PC-9 (cell line): ENCODE measurements at regions of chr16 and their contacts with region 1.

Region 1: GRCh38 chr16:55701442-55702319 is 45.9 kb downstream of the SLC6A2 start:
- DNase-seq: peak; percentile 50 to 53
- H3K4me3 ChIP-seq: no peak overlapping the region
- H3K27ac ChIP-seq: no peak overlapping the region
- H3K4me1 ChIP-seq: peaks cover 10% of the 10 kb centered on the region
- H3K27me3 ChIP-seq: no peaks in the 10 kb centered on the region
- CTCF ChIP-seq: peak; percentile 86

Region 2: GRCh38 chr16:55465077-55465896 is 236.4 kb before region 1 on chr16:
- CTCF ChIA-PET with region 1: interaction called, 6 read pairs
- POLR2A ChIA-PET with region 1: no interaction called
- intact Hi-C with region 1: loop called (anchors 1 kb)
- DNase-seq: peak; percentile 72 to 82
- H3K4me3 ChIP-seq: no peak overlapping the region
- H3K27ac ChIP-seq: no peak overlapping the region
- H3K4me1 ChIP-seq: peaks cover 11% of the 10 kb centered on the region
- H3K27me3 ChIP-seq: no peaks in the 10 kb centered on the region
- CTCF ChIP-seq: peak; percentile 100

Region 3: DNA sequence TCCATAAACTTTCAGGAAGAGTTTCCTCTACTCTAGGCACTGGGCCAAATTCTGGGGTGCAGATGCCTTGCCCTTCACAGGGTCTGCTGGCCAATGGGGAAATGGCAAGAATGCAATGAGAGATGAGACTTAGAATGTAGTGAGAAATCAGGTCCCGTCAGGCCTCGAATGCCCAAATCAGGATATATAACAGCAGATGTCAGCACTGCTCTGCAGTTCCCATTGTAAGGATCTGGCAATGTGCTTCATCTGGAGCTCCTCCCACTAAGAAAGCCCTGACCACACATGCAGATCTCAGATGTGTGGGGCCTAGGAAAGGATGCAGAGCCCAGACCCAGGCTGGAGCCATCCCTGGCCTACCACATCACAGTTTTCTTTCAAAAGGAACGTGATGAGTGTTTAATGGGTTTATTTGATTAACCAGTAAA is 206.7 kb before region 1 on chr16:
- CTCF ChIA-PET with region 1: no interaction called
- POLR2A ChIA-PET with region 1: no interaction called
- intact Hi-C with region 1: loop called (anchors 1 kb)
- DNase-seq: no peak
- H3K4me3 ChIP-seq: no peak overlapping the region
- H3K27ac ChIP-seq: no peak overlapping the region
- H3K4me1 ChIP-seq: peaks cover 15% of the 10 kb centered on the region
- H3K27me3 ChIP-seq: no peaks in the 10 kb centered on the region
- CTCF ChIP-seq: no peak; the same call in 1 of the 2 replicates

Region 4: GRCh38 chr16:55622930-55623561 is 78.6 kb before region 1 on chr16:
- CTCF ChIA-PET with region 1: no interaction called
- POLR2A ChIA-PET with region 1: no interaction called
- intact Hi-C with region 1: loop called (anchors 1 kb)
- DNase-seq: peak; percentile 49 to 81
- H3K4me3 ChIP-seq: no peak overlapping the region
- H3K27ac ChIP-seq: no peak overlapping the region
- H3K4me1 ChIP-seq: peaks cover 13% of the 10 kb centered on the region
- H3K27me3 ChIP-seq: no peaks in the 10 kb centered on the region
- CTCF ChIP-seq: peak; percentile 73

Region 5: DNA sequence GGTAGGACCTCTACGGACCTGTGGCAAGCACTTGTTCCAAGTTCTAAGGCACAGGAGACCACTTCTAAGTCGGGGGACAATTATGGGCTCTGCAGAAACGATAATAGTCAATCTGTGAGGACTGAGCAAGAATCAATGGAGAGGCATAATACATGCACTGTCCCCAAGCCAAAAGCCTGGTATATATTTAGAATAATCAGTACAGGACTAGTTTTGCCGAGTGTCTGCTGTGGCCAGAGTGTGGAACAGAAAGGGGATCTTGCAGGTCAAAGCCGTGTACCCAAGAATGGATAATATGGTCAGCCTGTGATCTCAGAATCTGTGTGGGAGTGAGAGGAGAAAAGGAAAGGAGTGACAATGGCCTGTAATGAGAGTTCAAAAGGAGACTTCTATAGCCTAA is 409.4 kb after region 1 on chr16:
- CTCF ChIA-PET with region 1: interaction called, 12 read pairs
- POLR2A ChIA-PET with region 1: no interaction called
- intact Hi-C with region 1: no loop called
- DNase-seq: no peak
- H3K4me3 ChIP-seq: no peak overlapping the region
- H3K27ac ChIP-seq: no peak overlapping the region
- H3K4me1 ChIP-seq: no peaks in the 10 kb centered on the region
- H3K27me3 ChIP-seq: no peaks in the 10 kb centered on the region
- CTCF ChIP-seq: no peak